ENCODE measurements at regions of chr10 and their contacts with region 1.

Region 1: GRCh38 chr10:101749047-101750016 is 26.6 kb downstream of the FGF8 start:
- DNase-seq: peak; percentile 57
- ATAC-seq: peak; percentile 98
- H3K4me3 Mint-ChIP-seq: no peak overlapping the region
- H3K27ac Mint-ChIP-seq: peak overlapping the region; percentile 61
- H3K4me1 Mint-ChIP-seq: peaks cover 13% of the 10 kb centered on the region
- H3K27me3 Mint-ChIP-seq: peaks cover 7% of the 10 kb centered on the region
- CTCF ChIP-seq: no peak

Region 2: DNA sequence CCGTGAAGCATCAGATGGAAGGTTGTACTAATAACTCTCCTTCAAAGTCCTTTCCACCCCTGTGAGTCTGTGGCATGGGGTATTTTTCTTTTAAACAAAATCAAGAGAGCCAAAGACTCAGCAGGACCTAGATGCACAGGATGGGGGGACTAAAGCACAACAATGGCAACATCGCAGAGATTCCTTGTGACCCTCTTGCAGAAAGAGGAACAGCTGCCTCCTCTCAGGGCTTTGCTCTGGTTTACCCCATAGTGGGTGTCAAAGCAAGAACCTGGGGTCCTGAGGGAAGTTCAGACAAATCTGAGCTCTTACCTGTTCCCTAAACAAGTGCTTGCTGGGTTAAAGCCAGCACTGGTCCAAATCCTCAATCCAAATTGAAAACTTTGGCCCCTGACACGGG is 12.7 kb before region 1 on chr10:
- CTCF ChIA-PET with region 1: interaction called, 11 read pairs
- POLR2A ChIA-PET with region 1: interaction called, 3 read pairs
- DNase-seq: no peak
- ATAC-seq: peak; percentile 55
- H3K4me3 Mint-ChIP-seq: no peak overlapping the region
- H3K27ac Mint-ChIP-seq: no peak overlapping the region
- H3K4me1 Mint-ChIP-seq: 0 out of 2 replicates have a peak, but pooled peaks cover 3% of the 10 kb centered on the region
- H3K27me3 Mint-ChIP-seq: no peaks in the 10 kb centered on the region; the same call in 1 of the 2 replicates
- CTCF ChIP-seq: no peak

Region 3: GRCh38 chr10:101759309-101760247 is 10.2 kb after region 1 on chr10:
- CTCF ChIA-PET with region 1: interaction called, 37 read pairs
- POLR2A ChIA-PET with region 1: no interaction called
- DNase-seq: no peak
- ATAC-seq: peak; percentile 83
- H3K4me3 Mint-ChIP-seq: no peak overlapping the region
- H3K27ac Mint-ChIP-seq: no peak overlapping the region
- H3K4me1 Mint-ChIP-seq: peaks cover 19% of the 10 kb centered on the region
- H3K27me3 Mint-ChIP-seq: peaks cover 11% of the 10 kb centered on the region
- CTCF ChIP-seq: no peak

Region 4: DNA sequence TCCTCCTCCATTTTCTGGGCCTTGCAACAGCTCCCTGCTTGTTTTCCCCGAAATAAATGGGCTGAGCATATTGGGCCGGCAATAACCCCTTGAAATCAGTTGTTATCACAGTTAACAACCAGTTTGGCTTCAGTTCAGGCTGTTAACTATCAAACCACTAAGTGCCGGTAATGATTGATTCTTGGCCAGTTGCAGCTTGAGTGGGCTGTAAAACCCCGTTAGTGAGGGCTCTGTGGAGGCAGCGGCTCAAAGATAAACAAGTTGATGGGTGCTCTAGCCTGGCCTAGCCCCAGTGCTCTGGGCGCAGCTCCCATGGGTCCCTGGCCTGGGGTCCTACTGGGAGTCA is 18.2 kb after region 1 on chr10:
- CTCF ChIA-PET with region 1: interaction called, 25 read pairs
- POLR2A ChIA-PET with region 1: no interaction called
- DNase-seq: no peak
- ATAC-seq: no peak
- H3K4me3 Mint-ChIP-seq: no peak overlapping the region
- H3K27ac Mint-ChIP-seq: no peak overlapping the region
- H3K4me1 Mint-ChIP-seq: peaks cover 12% of the 10 kb centered on the region
- H3K27me3 Mint-ChIP-seq: peaks cover 13% of the 10 kb centered on the region
- CTCF ChIP-seq: no peak

Region 5: GRCh38 chr10:101774589-101775272 is 25.4 kb after region 1 on chr10:
- CTCF ChIA-PET with region 1: interaction called, 25 read pairs
- POLR2A ChIA-PET with region 1: interaction called, 6 read pairs
- DNase-seq: peak; percentile 64
- ATAC-seq: peak; percentile 6
- H3K4me3 Mint-ChIP-seq: peak overlapping the region; percentile 61
- H3K27ac Mint-ChIP-seq: no peak overlapping the region
- H3K4me1 Mint-ChIP-seq: peaks cover 50% of the 10 kb centered on the region
- H3K27me3 Mint-ChIP-seq: peaks cover 70% of the 10 kb centered on the region
- CTCF ChIP-seq: no peak